ENCODE measurements at regions of chr7 and their contacts with region 1.

Region 1: GRCh38 chr7:18859318-18859717 is 258.1 kb downstream of the TWIST1 start:
- DNase-seq: no peak
- ATAC-seq: no peak
- H3K4me3 ChIP-seq: no peak overlapping the region
- H3K27ac ChIP-seq: no peak overlapping the region
- H3K4me1 ChIP-seq: no peaks in the 10 kb centered on the region; the same call in 1 of the 2 replicates
- H3K27me3 ChIP-seq: no peaks in the 10 kb centered on the region
- CTCF ChIP-seq: no peak
- POLR2A ChIP-seq: no peak
- RAD21 ChIP-seq: no peak

Region 2: GRCh38 chr7:17994079-17994850 is 865.1 kb before region 1 on chr7:
- CTCF ChIA-PET with region 1: no interaction called
- POLR2A ChIA-PET with region 1: no interaction called
- dilution Hi-C with region 1: no loop called
- in situ Hi-C with region 1: no loop called
- intact Hi-C with region 1: no loop called
- DNase-seq: no peak
- ATAC-seq: no peak
- H3K4me3 ChIP-seq: no peak overlapping the region
- H3K27ac ChIP-seq: no peak overlapping the region
- H3K4me1 ChIP-seq: no peaks in the 10 kb centered on the region
- H3K27me3 ChIP-seq: no peaks in the 10 kb centered on the region
- CTCF ChIP-seq: no peak
- POLR2A ChIP-seq: no peak
- RAD21 ChIP-seq: no peak

Region 3: DNA sequence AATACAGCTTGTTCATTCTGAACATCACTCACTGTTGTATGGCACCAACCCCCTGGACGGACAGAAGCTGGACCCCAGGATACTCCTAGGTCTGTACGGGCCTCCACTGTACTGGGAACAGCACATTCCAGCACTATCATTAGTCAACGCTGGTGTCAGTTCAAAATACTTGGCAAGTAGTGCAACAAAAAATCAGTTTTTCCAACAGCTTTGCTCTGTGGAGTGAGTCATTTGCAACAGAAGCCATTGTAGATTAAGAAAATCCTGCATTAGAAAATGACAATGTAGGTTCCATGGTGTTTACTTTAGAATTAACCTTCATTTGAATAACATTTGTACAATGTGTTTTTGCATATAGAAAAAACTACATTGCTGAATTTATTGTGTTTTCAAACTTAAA is 97.1 kb before region 1 on chr7:
- CTCF ChIA-PET with region 1: no interaction called
- POLR2A ChIA-PET with region 1: no interaction called
- dilution Hi-C with region 1: no loop called
- in situ Hi-C with region 1: no loop called
- intact Hi-C with region 1: loop called (anchors 5 kb)
- DNase-seq: peak; percentile 66
- ATAC-seq: peak; percentile 35; the same call in 1 of the 2 replicates
- H3K4me3 ChIP-seq: no peak overlapping the region
- H3K27ac ChIP-seq: no peak overlapping the region
- H3K4me1 ChIP-seq: peaks cover 3% of the 10 kb centered on the region
- H3K27me3 ChIP-seq: no peaks in the 10 kb centered on the region
- CTCF ChIP-seq: no peak
- POLR2A ChIP-seq: no peak
- RAD21 ChIP-seq: no peak